MCF 10A (cell line): ENCODE measurements at regions of chr12 and their contacts with region 1.

Region 1: DNA sequence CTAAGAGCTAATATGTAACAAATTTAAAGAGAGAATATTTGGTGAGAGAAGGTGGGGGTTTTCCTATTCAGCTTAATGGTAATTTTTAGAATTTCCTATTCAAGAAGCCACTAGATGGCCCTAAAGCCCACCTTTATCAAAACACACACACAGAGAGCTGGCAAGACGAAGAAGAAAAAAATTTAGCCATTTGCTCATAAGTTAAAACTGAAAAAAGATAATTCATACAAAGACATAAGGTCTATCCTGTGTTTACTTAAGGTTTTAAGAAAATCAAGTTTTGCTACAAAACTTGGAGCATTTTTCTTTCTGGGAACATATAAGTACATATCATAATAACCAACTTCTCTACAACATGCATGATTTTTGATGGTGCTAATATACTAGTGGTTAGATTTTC is 46.8 kb upstream of the PCED1B start:
- DNase-seq: peak; percentile 62
- H3K4me3 Mint-ChIP-seq: no peak overlapping the region
- H3K27ac Mint-ChIP-seq: peak overlapping the region; percentile 72
- H3K4me1 Mint-ChIP-seq: peaks cover 21% of the 10 kb centered on the region
- H3K27me3 Mint-ChIP-seq: no peaks in the 10 kb centered on the region
- CTCF ChIP-seq: peak; percentile 51

Region 2: DNA sequence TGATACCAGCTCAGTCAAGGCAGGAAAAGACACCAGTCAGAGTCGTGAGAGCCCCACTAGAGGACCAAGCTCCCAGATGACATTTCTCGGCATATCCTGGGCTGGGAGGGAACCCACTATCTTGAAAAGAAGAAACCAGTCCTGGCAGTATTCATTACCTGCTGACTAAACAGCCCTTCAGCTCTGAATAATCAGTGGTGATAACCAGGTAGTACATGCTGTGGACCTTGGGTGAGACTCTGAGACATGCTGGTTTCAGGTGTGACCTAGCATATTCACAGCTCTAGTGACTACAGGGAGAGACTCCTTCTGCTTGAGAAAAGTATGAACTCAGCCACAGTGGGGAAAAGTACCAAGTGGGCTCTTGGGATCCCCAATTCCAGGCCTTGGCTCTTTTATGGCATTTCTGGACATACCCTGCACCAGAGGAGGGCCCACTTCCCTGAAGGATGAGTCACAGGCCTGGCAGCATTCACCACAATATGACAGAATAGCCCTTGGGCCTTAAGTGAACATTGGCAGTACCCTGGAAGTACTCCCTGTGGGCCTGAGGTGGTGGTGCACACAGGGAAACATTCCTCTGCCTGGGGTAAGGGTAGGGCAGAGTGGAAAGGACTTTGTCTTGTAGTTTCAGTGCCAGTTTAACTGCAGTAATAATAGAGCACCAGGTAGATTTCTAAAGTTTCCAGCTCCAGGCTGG is 124.3 kb before region 1 on chr12:
- CTCF ChIA-PET with region 1: no interaction called
- POLR2A ChIA-PET with region 1: no interaction called
- intact Hi-C with region 1: no loop called
- DNase-seq: peak; percentile 73
- H3K4me3 Mint-ChIP-seq: no peak overlapping the region
- H3K27ac Mint-ChIP-seq: peak overlapping the region; percentile 89
- H3K4me1 Mint-ChIP-seq: peaks cover 22% of the 10 kb centered on the region
- H3K27me3 Mint-ChIP-seq: no peaks in the 10 kb centered on the region
- CTCF ChIP-seq: no peak

Region 3: GRCh38 chr12:47071241-47071852 is 38.7 kb after region 1 on chr12:
- CTCF ChIA-PET with region 1: interaction called, 51 read pairs
- POLR2A ChIA-PET with region 1: interaction called, 8 read pairs
- intact Hi-C with region 1: no loop called
- DNase-seq: peak; percentile 44
- H3K4me3 Mint-ChIP-seq: no peak overlapping the region
- H3K27ac Mint-ChIP-seq: no peak overlapping the region
- H3K4me1 Mint-ChIP-seq: peaks cover 18% of the 10 kb centered on the region
- H3K27me3 Mint-ChIP-seq: no peaks in the 10 kb centered on the region
- CTCF ChIP-seq: peak; percentile 29

Region 4: GRCh38 chr12:47307680-47308399 is 275.2 kb after region 1 on chr12:
- CTCF ChIA-PET with region 1: interaction called, 43 read pairs
- POLR2A ChIA-PET with region 1: interaction called, 6 read pairs
- intact Hi-C with region 1: loop called (anchors 1 kb)
- DNase-seq: peak; percentile 75
- H3K4me3 Mint-ChIP-seq: no peak overlapping the region
- H3K27ac Mint-ChIP-seq: no peak overlapping the region
- H3K4me1 Mint-ChIP-seq: peaks cover 11% of the 10 kb centered on the region
- H3K27me3 Mint-ChIP-seq: no peaks in the 10 kb centered on the region
- CTCF ChIP-seq: peak; percentile 73

Region 5: GRCh38 chr12:47547085-47547484 is 514.4 kb after region 1 on chr12:
- CTCF ChIA-PET with region 1: no interaction called
- POLR2A ChIA-PET with region 1: no interaction called
- intact Hi-C with region 1: loop called (anchors 5 kb)
- DNase-seq: peak; percentile 52
- H3K4me3 Mint-ChIP-seq: no peak overlapping the region
- H3K27ac Mint-ChIP-seq: no peak overlapping the region
- H3K4me1 Mint-ChIP-seq: no peaks in the 10 kb centered on the region
- H3K27me3 Mint-ChIP-seq: peaks cover 11% of the 10 kb centered on the region
- CTCF ChIP-seq: no peak

Region 6: GRCh38 chr12:47651368-47652254 is 619.0 kb after region 1 on chr12:
- CTCF ChIA-PET with region 1: interaction called, 22 read pairs
- POLR2A ChIA-PET with region 1: no interaction called
- intact Hi-C with region 1: no loop called
- DNase-seq: peak; percentile 79
- H3K4me3 Mint-ChIP-seq: peak overlapping the region; percentile 21
- H3K27ac Mint-ChIP-seq: no peak overlapping the region
- H3K4me1 Mint-ChIP-seq: no peaks in the 10 kb centered on the region
- H3K27me3 Mint-ChIP-seq: no peaks in the 10 kb centered on the region
- CTCF ChIP-seq: peak; percentile 64